ENCODE measurements at regions of chr6 and their contacts with region 1.

Region 1: DNA sequence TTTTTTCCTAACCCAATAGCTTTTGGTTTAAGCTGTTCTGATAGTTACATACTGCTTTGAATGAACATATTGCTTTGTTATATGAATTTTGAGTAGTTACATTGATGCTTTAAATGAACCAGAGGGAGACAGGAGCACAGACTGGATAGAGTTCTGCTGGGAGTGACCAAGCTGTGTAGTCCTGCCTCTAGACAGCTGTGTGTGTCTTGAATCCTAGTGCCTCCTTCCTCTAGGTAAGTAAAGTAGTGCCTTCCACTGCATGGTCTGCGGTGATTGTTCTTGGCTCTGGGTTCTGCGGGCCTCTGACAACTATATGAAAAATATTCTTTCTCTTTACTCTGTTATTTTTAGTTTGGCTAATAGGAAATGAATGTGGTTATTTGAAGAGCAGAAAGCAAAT is 46.0 kb upstream of the ADGRG6 start:
- DNase-seq: no peak
- H3K4me3 ChIP-seq: no peak overlapping the region
- H3K27ac ChIP-seq: no peak overlapping the region
- H3K4me1 ChIP-seq: no peaks in the 10 kb centered on the region
- H3K27me3 ChIP-seq: no peaks in the 10 kb centered on the region
- CTCF ChIP-seq: no peak

Region 2: GRCh38 chr6:142132625-142133024 is 123.2 kb before region 1 on chr6 and contains the start of gene GJE1:
- CTCF ChIA-PET with region 1: no interaction called
- POLR2A ChIA-PET with region 1: no interaction called
- intact Hi-C with region 1: no loop called
- DNase-seq: no peak
- H3K4me3 ChIP-seq: no peak within 1 kb of the TSS
- H3K27ac ChIP-seq: no peak within 1 kb of the TSS
- H3K4me1 ChIP-seq: no peaks in the 10 kb centered on the region
- H3K27me3 ChIP-seq: no peaks in the 10 kb centered on the region
- CTCF ChIP-seq: no peak
- total RNA-seq, gene GJE1: not detected in 2 replicates

Region 3: DNA sequence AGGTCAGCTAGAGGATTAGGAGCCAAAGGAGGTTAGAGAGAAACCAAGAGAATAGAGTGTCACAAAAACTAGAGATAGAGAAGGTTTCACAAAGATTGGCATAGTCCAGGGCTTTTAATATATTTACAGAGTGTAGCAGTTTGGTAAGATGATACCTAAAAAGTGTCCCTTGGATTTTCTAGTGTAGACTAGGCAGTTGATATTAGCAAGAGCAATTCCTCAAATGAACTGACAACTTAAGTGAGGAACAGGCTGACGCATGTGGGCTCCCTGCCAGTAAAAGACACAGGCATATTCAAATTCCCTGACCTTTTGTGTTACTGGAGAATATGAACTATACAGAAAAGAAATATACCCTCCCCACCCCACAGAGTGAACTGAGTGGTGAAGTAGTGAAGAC is 68.6 kb before region 1 on chr6:
- CTCF ChIA-PET with region 1: interaction called, 20 read pairs
- POLR2A ChIA-PET with region 1: no interaction called
- intact Hi-C with region 1: no loop called
- DNase-seq: peak; percentile 74
- H3K4me3 ChIP-seq: no peak overlapping the region
- H3K27ac ChIP-seq: no peak overlapping the region
- H3K4me1 ChIP-seq: peaks cover 14% of the 10 kb centered on the region
- H3K27me3 ChIP-seq: no peaks in the 10 kb centered on the region
- CTCF ChIP-seq: no peak

Region 4: GRCh38 chr6:142356201-142356883 is 100.6 kb after region 1 on chr6:
- CTCF ChIA-PET with region 1: no interaction called
- POLR2A ChIA-PET with region 1: no interaction called
- intact Hi-C with region 1: no loop called
- DNase-seq: no peak
- H3K4me3 ChIP-seq: no peak overlapping the region
- H3K27ac ChIP-seq: no peak overlapping the region
- H3K4me1 ChIP-seq: no peaks in the 10 kb centered on the region
- H3K27me3 ChIP-seq: no peaks in the 10 kb centered on the region
- CTCF ChIP-seq: no peak

Measured in A673 (cell line).